ENCODE measurements at regions of chr21 and their contacts with region 1.

Region 1: GRCh38 chr21:44454747-44455523 is at the start of gene LRRC3:
- DNase-seq: peak; percentile 71
- ATAC-seq: peak; percentile 82
- H3K4me3 Mint-ChIP-seq: peak within 1 kb of the TSS; percentile 75
- H3K27ac Mint-ChIP-seq: no peak within 1 kb of the TSS
- H3K4me1 Mint-ChIP-seq: peaks cover 2% of the 10 kb centered on the region
- H3K27me3 Mint-ChIP-seq: peaks cover 4% of the 10 kb centered on the region
- CTCF ChIP-seq: no peak
- total RNA-seq, gene LRRC3: 0.91 and 1.00 TPM in 2 replicates

Region 2: GRCh38 chr21:44428281-44428942 is 26.5 kb before region 1 on chr21:
- CTCF ChIA-PET with region 1: no interaction called
- POLR2A ChIA-PET with region 1: interaction called, 3 read pairs
- intact Hi-C with region 1: loop called (anchors 2 kb)
- DNase-seq: peak; percentile 30
- ATAC-seq: peak; percentile 62
- H3K4me3 Mint-ChIP-seq: no peak overlapping the region
- H3K27ac Mint-ChIP-seq: no peak overlapping the region
- H3K4me1 Mint-ChIP-seq: peaks cover 5% of the 10 kb centered on the region
- H3K27me3 Mint-ChIP-seq: no peaks in the 10 kb centered on the region
- CTCF ChIP-seq: no peak

Region 3: DNA sequence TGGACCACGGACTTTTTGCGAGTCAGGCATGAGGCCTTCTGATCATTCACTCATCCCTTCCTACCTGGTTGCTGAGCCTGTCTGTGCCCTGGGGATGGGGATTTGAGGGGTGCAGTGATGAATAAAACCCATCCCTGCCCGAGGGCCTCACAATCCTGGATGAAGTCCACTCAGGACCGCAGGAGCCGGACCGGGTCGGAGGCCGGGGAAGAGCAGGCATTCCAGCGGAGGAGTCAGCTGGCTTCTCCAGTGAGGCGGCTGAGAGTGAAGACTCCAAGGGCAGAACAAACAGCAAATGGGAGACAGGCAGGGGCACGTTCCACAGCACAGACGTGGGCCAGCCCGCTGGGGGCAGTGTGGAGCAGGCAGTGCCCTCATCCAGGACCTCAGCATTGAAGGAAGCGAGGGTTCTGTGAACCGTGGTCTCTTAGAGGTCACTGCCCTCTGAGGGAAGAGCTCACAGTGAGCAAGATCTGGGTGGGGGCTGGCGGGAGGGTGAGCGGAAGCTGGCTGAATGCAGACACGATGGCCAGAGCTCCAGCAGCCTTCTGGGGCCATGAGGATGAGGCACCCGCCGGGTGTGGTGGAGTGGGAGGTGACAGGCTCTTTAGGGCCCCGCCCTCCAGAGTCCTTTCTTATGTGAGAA is 10.5 kb before region 1 on chr21:
- CTCF ChIA-PET with region 1: no interaction called
- POLR2A ChIA-PET with region 1: no interaction called
- intact Hi-C with region 1: no loop called
- DNase-seq: no peak
- ATAC-seq: no peak
- H3K4me3 Mint-ChIP-seq: no peak overlapping the region
- H3K27ac Mint-ChIP-seq: no peak overlapping the region
- H3K4me1 Mint-ChIP-seq: peaks cover 2% of the 10 kb centered on the region
- H3K27me3 Mint-ChIP-seq: peaks cover 13% of the 10 kb centered on the region
- CTCF ChIP-seq: no peak

Region 4: GRCh38 chr21:44466996-44467873 is 12.3 kb after region 1 on chr21:
- CTCF ChIA-PET with region 1: no interaction called
- POLR2A ChIA-PET with region 1: no interaction called
- intact Hi-C with region 1: no loop called
- DNase-seq: no peak
- ATAC-seq: no peak
- H3K4me3 Mint-ChIP-seq: no peak overlapping the region
- H3K27ac Mint-ChIP-seq: no peak overlapping the region
- H3K4me1 Mint-ChIP-seq: no peaks in the 10 kb centered on the region
- H3K27me3 Mint-ChIP-seq: peaks cover 1% of the 10 kb centered on the region
- CTCF ChIP-seq: no peak

Measured in activated B cell treated with CpG ODN at 0.5 μM for 24 hours (primary cell).